Aorta (tissue), 5 donors: ENCODE measurements at regions of chr12 and their contacts with region 1.

Region 1: DNA sequence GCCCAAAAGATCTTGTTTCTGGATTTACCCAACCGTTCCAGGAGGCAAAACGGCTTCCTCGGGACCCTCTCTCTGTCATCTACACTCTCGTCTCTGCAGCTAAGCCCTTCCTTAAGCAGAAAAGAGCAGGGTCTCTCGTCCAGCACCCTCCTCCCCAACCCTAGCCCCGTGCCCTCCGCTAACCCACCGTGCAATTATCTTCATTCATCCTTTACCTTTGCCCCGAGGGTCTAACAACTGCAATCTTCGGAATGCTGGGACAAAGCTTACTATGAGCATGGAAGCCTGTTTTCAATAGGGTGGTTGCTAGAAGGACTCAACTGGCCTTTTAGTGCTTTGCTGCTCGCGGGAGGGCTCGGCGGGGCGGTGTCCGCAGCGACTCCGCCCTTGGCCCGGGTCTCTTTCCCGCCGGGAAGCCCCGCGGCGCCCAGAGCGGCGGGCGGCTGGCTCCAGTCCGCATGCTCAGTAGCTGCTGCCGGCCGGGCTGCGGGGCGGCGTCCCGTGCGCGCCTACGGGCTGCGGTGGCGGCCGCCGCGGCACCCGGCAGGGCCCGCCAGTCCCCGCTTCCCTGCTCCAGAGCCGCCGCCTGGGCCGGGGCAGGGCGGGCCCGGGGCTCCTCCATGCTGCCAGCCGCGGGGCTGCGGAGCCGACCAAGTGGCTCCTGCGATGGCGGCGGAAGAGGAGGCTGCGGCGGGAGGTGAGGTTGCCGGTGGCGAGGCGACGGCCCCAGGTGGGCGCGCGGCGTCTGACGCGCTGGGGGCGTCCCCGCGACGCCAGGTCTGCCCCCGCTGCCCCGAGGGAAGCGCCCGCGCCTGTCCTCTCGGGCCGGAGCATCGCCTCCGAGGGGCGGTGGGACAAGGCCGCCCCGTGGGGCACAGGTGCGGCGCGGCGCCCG is at the start of gene BMAL2:
- DNase-seq: peak; percentile 69 to 89
- ATAC-seq: peak; percentile 66
- H3K4me3 ChIP-seq: peak within 1 kb of the TSS; percentile 42 to 83
- H3K27ac ChIP-seq: peak within 1 kb of the TSS in 1 of 2 donors; percentile 8
- H3K4me1 ChIP-seq: peaks cover 1 to 13% of the 10 kb centered on the region in 2 donors
- H3K27me3 ChIP-seq: no peaks in the 10 kb centered on the region
- total RNA-seq, gene BMAL2: 18.1 to 22.6 TPM

Region 2: DNA sequence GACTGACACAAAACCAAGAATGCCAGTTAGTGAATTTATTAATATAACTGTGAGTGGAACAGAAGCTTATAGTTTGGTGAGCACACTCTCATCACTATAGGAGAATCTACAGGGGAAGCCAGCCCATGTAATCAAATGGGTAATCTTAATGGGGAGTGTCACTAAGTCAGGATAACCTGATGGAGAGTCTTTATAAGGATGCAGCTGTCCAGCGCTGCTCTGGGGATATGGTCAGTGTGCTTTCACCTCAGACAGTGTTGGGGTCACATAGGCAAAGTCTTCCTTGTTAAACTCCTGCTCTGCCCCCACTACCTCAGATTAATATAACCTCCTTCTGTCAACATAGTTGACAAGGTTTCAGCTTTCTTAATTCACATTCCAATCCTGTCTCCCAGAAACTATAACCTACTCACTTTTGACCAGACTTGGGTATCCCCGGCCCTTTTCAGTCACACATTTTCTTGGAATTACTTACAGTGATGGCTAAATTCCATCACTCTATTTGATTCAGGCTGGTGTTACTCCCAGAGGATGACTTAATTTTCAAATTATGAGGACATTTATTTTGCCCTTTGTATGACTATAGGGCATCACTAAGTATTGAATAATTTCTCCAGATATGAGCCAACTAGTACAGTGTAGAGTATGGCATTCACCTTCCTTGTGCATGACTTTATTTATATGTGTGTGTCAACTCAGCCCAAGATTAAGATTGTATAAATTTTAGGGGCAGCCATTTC is 75.4 kb before region 1 on chr12:
- intact Hi-C with region 1: no loop called
- DNase-seq: no peak
- ATAC-seq: peak; percentile 26
- H3K4me3 ChIP-seq: no peak overlapping the region
- H3K27ac ChIP-seq: peak overlapping the region; percentile 51 to 67
- H3K4me1 ChIP-seq: peaks cover 12 to 26% of the 10 kb centered on the region in 2 donors
- H3K27me3 ChIP-seq: no peaks in the 10 kb centered on the region

Region 3: DNA sequence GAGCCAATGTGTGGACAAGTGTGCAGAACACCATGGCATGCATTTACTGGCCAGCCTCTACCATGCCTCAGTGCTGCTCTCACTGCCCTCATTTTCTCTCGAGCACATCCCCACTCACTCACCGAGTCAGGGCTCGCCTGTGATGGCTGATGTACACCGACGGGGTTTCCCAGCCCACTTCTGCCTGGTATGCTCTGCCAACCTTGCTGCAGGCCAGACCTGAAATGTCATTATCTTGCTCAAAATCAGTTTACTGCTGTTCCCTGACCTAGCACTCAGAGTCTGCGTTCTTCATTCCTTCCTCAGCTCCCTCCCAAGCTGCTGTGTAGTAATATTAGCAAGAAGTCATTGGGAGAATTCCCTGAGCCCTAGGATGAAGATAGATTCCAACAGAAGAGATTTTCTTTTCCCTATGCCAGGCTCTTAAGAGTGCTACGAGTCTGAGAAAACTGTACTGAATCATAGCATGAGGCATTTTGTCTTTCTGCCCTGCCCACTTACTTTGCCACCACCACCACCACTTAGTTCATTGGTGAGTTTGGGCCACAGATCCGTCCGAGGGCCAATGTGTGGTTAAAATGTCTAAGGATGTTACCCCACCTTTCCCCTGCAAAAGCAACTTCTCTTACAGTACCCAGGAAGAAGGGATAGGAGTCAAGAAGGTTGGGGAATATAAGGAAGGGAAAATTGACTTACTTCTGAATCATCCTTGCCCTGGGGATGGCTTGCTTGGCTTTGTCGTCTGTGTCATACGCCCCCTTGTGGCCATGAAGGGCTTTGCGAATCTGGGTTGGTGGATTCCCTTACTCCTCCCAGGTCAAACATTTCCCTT is 51.0 kb after region 1 on chr12:
- intact Hi-C with region 1: loop called in 1 of 2 experiments (anchors 5 kb)
- DNase-seq: peak; percentile 83 to 92
- ATAC-seq: peak; percentile 85
- H3K4me3 ChIP-seq: no peak overlapping the region
- H3K27ac ChIP-seq: no peak overlapping the region
- H3K4me1 ChIP-seq: no peaks in the 10 kb centered on the region
- H3K27me3 ChIP-seq: no peaks in the 10 kb centered on the region

Region 4: GRCh38 chr12:27644158-27644845 is 311.6 kb after region 1 on chr12:
- intact Hi-C with region 1: loop called in 1 of 2 experiments (anchors 10 kb)
- DNase-seq: no peak
- ATAC-seq: no peak
- H3K4me3 ChIP-seq: no peak overlapping the region
- H3K27ac ChIP-seq: peak overlapping the region in 1 of 2 donors; percentile 28
- H3K4me1 ChIP-seq: peaks cover 0 to 11% of the 10 kb centered on the region in 2 donors
- H3K27me3 ChIP-seq: no peaks in the 10 kb centered on the region

Region 5: GRCh38 chr12:27652174-27652763 is 319.6 kb after region 1 on chr12:
- intact Hi-C with region 1: loop called (anchors 10 kb)
- DNase-seq: no peak
- ATAC-seq: peak; percentile 79
- H3K4me3 ChIP-seq: no peak overlapping the region
- H3K27ac ChIP-seq: no peak overlapping the region
- H3K4me1 ChIP-seq: no peaks in the 10 kb centered on the region
- H3K27me3 ChIP-seq: no peaks in the 10 kb centered on the region

Region 6: GRCh38 chr12:27709932-27710591 is 377.4 kb after region 1 on chr12:
- intact Hi-C with region 1: loop called in 1 of 2 experiments (anchors 5 kb)
- DNase-seq: peak in 1 of 2 donors; percentile 50
- ATAC-seq: peak; percentile 75
- H3K4me3 ChIP-seq: peak overlapping the region; percentile 55 to 62
- H3K27ac ChIP-seq: peak overlapping the region; percentile 36 to 83
- H3K4me1 ChIP-seq: no peaks in the 10 kb centered on the region
- H3K27me3 ChIP-seq: no peaks in the 10 kb centered on the region